ENCODE measurements at regions of chr3 and their contacts with region 1.

Region 1: GRCh38 chr3:3578718-3579117 is 220.5 kb upstream of the LRRN1 start:
- DNase-seq: peak; percentile 5 to 38
- ATAC-seq: peak; percentile 83 to 96 (median 90)
- H3K4me3 ChIP-seq: no peak overlapping the region
- H3K4me3 Mint-ChIP-seq: peak overlapping the region; percentile 60
- H3K27ac ChIP-seq: peak overlapping the region; percentile 41
- H3K27ac Mint-ChIP-seq: peak overlapping the region; percentile 73 to 85
- H3K4me1 ChIP-seq: peaks cover 19% of the 10 kb centered on the region
- H3K4me1 Mint-ChIP-seq: peaks cover 22 to 31% of the 10 kb centered on the region in 2 donors
- H3K27me3 ChIP-seq: no peaks in the 10 kb centered on the region
- H3K27me3 Mint-ChIP-seq: no peaks in the 10 kb centered on the region
- CTCF ChIP-seq: no peak

Region 2: DNA sequence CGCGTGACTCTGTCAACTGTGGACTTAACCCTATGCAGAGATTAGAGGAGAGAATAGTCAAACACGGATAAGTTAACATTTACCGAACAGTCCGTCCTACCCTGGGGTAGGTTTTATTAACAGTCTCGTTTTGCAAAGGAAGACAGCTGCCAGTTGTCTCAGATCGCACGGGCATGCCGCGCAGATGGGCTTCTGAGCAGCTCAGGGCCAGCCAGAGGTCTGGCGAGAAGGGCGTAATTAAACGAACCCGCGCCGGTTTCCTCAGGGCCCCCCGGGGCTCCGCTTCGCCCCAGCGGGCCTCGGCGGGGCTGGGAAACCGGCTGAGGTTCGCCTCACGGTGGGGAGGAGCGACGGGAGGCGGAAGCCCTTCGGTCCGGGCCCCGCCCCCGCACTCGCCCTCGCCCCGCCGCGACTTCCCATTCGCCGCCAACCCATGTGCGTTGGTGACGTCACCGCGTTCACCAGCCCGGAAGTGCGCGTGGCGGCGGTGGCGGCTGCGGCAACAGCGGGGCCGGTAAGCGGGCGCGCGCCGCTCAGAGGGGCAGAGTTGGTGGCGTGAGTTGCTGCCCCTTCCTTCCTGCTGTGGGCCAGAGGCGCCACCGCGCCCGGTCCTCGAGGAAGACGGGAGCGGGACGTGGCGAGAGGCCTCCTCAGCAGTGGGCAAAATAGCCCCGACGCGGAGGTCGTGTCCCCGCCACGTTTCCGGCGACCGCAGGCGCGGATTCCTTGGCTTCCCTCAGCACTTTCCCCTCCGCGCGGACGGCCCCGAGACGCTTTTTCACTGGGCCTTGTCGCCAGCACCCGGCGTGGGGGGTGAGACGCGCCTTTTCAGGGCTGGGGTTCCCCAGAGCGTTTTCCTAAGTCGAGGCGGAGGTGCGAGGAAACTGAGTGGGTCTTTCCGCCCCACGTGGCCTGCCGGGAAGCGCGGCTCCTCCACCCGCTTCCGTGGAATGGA is 452.0 kb before region 1 on chr3 and contains the start of gene TRNT1:
- intact Hi-C with region 1: loop called (anchors 5 kb)
- DNase-seq: peak; percentile 96 to 99
- ATAC-seq: peak; percentile 91 to 95 (median 91)
- H3K4me3 ChIP-seq: peak within 1 kb of the TSS; percentile 81
- H3K4me3 Mint-ChIP-seq: peak within 1 kb of the TSS; percentile 97
- H3K27ac ChIP-seq: peak within 1 kb of the TSS; percentile 94
- H3K27ac Mint-ChIP-seq: peak within 1 kb of the TSS; percentile 99 to 100
- H3K4me1 ChIP-seq: peaks cover 23% of the 10 kb centered on the region
- H3K4me1 Mint-ChIP-seq: peaks cover 34 to 43% of the 10 kb centered on the region in 2 donors
- H3K27me3 ChIP-seq: no peaks in the 10 kb centered on the region
- H3K27me3 Mint-ChIP-seq: no peaks in the 10 kb centered on the region
- CTCF ChIP-seq: no peak
- total RNA-seq, gene TRNT1: 33.3 to 41.9 (median 36.6) TPM

Region 3: GRCh38 chr3:3589715-3590130 is 11.0 kb after region 1 on chr3:
- intact Hi-C with region 1: loop called (anchors 1 kb)
- DNase-seq: peak in 1 of 2 donors; percentile 17
- ATAC-seq: peak; percentile 86 to 93 (median 88)
- H3K4me3 ChIP-seq: no peak overlapping the region
- H3K4me3 Mint-ChIP-seq: peak overlapping the region; percentile 64
- H3K27ac ChIP-seq: peak overlapping the region; percentile 27
- H3K27ac Mint-ChIP-seq: peak overlapping the region; percentile 81 to 82
- H3K4me1 ChIP-seq: no peaks in the 10 kb centered on the region
- H3K4me1 Mint-ChIP-seq: peaks cover 13 to 17% of the 10 kb centered on the region in 2 donors
- H3K27me3 ChIP-seq: no peaks in the 10 kb centered on the region
- H3K27me3 Mint-ChIP-seq: no peaks in the 10 kb centered on the region
- CTCF ChIP-seq: no peak